ENCODE measurements at regions of chr1 and their contacts with region 1.

Region 1: DNA sequence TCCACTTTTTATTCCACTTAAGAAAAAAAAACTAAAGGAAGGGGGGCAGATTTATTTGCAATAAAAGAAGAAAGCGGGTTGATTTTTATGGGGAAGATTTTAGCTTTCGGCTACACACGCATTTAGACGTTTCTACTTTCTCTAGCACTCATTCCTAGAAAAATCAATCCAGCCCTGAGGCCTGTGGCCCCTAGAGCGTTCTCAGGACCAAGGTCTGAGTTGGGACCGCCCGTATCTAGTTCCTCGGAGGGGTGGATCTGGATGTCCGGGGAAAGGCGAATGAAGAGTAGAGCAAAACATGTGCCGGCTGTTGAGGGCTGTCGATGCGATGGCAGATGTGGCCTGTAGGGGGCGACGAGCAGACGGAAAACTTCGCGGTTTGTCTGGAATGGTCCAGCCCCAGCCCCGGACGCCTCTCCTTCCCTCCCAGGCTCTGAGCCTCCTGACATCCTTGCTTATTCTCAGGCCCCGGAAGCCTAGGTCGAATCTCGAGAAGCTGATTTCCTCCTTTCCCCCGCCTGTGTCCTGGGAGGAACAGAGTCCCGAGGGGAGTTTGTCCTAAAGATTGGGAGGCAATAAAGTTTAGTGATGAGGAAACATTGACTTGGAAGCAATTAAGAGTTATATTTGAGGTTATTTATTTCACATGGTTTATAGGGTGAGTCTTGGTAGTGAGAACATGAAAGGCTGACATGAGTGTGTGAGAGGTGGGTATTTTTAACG is 5.2 kb downstream of the FOXD3 start:
- DNase-seq: peak; percentile 96
- ATAC-seq: peak; percentile 59
- H3K4me3 Mint-ChIP-seq: peak overlapping the region; percentile 93
- H3K27ac Mint-ChIP-seq: peak overlapping the region; percentile 50; the same call in 1 of the 2 replicates
- H3K4me1 Mint-ChIP-seq: peaks cover 65% of the 10 kb centered on the region
- H3K27me3 Mint-ChIP-seq: peaks cover 78% of the 10 kb centered on the region
- CTCF ChIP-seq: peak; percentile 96

Region 2: GRCh38 chr1:63173161-63173560 is 154.4 kb before region 1 on chr1:
- CTCF ChIA-PET with region 1: no interaction called
- POLR2A ChIA-PET with region 1: no interaction called
- DNase-seq: no peak
- ATAC-seq: no peak
- H3K4me3 Mint-ChIP-seq: no peak overlapping the region
- H3K27ac Mint-ChIP-seq: no peak overlapping the region
- H3K4me1 Mint-ChIP-seq: peaks cover 9% of the 10 kb centered on the region
- H3K27me3 Mint-ChIP-seq: peaks cover 19% of the 10 kb centered on the region
- CTCF ChIP-seq: no peak

Region 3: GRCh38 chr1:63189677-63190076 is 137.9 kb before region 1 on chr1:
- CTCF ChIA-PET with region 1: interaction called, 14 read pairs
- POLR2A ChIA-PET with region 1: no interaction called
- DNase-seq: peak; percentile 52
- ATAC-seq: peak; percentile 92
- H3K4me3 Mint-ChIP-seq: peak overlapping the region; percentile 1
- H3K27ac Mint-ChIP-seq: peak overlapping the region; percentile 1; the same call in 1 of the 2 replicates
- H3K4me1 Mint-ChIP-seq: peaks cover 60% of the 10 kb centered on the region
- H3K27me3 Mint-ChIP-seq: peaks cover 40% of the 10 kb centered on the region
- CTCF ChIP-seq: peak; percentile 33

Region 4: GRCh38 chr1:63316984-63317816 is 10.4 kb before region 1 on chr1:
- CTCF ChIA-PET with region 1: interaction called, 22 read pairs
- POLR2A ChIA-PET with region 1: interaction called, 8 read pairs
- DNase-seq: peak; percentile 96
- ATAC-seq: peak; percentile 74
- H3K4me3 Mint-ChIP-seq: peak overlapping the region; percentile 94
- H3K27ac Mint-ChIP-seq: peak overlapping the region; percentile 84
- H3K4me1 Mint-ChIP-seq: peaks cover 48% of the 10 kb centered on the region
- H3K27me3 Mint-ChIP-seq: peaks cover 27% of the 10 kb centered on the region
- CTCF ChIP-seq: peak; percentile 56

Region 5: DNA sequence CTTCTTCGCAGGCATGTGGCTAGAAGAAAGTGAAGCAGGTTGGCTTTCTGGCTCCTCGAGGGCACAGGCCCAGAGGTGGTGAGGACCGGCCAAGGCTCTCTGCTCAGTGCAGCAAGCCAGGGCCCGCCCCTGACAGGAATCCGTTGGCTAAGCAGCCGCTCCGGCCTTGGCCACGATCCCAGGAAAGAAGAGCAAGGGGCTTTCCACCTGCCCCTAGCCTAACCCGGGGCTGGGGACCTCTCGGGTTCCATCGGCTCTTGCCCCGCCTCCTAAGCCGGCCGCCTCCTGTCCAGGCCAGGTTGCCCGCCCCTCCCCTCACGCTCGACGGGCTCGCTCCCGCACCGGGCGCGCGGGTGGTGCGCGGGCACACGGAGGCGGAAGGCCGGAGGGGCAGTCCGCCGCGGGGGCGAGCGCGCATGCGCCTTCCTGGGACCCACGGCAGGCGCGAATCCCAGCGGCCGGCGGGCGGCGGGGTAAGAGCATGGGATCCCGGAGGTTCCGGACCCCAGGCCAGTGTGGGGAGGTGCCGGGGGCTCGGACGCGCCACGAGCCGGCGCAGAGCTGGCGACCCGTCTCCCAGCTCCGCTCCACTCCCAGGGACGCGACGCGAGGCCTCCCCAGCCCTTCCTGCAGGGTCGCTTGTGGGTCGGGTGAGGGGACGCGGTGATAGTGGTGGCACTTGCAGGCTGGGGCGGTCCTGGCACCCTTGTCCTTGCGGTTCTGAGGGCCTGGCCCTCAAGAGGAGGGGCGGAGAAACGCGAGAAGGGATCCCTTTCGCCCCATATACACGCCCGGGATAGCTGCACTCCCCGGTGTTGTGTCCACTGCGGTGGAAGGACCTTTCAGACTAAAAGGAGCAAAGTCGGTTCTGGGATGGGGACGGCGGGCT is 39.9 kb after region 1 on chr1 and contains the start of gene ALG6:
- CTCF ChIA-PET with region 1: interaction called, 13 read pairs
- POLR2A ChIA-PET with region 1: interaction called, 5 read pairs
- DNase-seq: peak; percentile 98
- ATAC-seq: peak; percentile 98
- H3K4me3 Mint-ChIP-seq: peak within 1 kb of the TSS; percentile 96
- H3K27ac Mint-ChIP-seq: peak within 1 kb of the TSS; percentile 87
- H3K4me1 Mint-ChIP-seq: peaks cover 24% of the 10 kb centered on the region
- H3K27me3 Mint-ChIP-seq: peaks cover 12% of the 10 kb centered on the region
- CTCF ChIP-seq: no peak
- total RNA-seq, gene ALG6: 17.6 to 25.4 TPM (median 23.7 TPM) in 3 replicates

Region 6: DNA sequence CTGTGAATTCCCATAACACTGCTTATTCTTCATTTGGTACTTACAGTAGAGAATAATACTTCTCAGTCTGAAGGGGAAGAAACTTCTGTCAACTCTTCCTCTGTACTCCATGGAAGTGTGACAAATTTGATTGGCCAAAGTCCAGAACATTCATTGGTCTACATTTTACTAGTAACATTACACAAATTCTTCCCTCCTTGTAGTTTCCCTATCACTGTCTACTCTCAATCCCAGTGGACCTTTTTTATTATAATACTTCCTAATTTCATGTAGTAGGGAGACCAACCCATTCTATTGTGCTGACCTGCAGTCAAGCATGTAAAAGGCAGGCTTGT is 114.5 kb after region 1 on chr1:
- CTCF ChIA-PET with region 1: interaction called, 25 read pairs
- POLR2A ChIA-PET with region 1: no interaction called
- DNase-seq: no peak
- ATAC-seq: no peak
- H3K4me3 Mint-ChIP-seq: no peak overlapping the region
- H3K27ac Mint-ChIP-seq: no peak overlapping the region
- H3K4me1 Mint-ChIP-seq: peaks cover 10% of the 10 kb centered on the region
- H3K27me3 Mint-ChIP-seq: no peaks in the 10 kb centered on the region
- CTCF ChIP-seq: no peak